GM12878 (cell line): ENCODE measurements at regions of chr5 and their contacts with region 1.

Region 1: DNA sequence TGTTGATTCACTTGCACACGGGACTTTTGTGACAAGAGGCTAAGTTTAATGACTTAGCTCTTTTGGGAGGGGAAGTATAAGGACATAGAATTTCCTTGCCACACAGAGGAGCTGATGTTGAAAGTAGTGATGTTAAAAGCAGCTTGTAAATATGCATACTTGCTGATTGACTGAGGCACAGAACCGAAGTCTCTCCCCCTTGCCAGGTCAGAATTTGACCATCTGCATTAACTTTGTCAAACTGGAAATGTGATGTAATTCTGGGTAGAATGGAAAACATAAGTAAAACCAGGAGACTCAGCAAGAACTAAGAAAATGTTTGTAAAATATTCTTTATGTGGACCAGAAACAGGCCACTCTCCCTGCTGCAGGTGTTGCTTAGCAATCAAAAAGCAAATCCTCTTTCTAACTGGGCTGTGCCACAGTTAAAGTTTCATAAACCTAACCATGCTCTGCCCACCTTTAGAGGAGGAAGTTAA is 284.2 kb downstream of the NR3C1 start:
- DNase-seq: no peak
- ATAC-seq: peak; percentile 82
- H3K4me3 ChIP-seq: no peak overlapping the region
- H3K27ac ChIP-seq: peak overlapping the region; percentile 35
- H3K4me1 ChIP-seq: peaks cover 23% of the 10 kb centered on the region
- H3K27me3 ChIP-seq: no peaks in the 10 kb centered on the region
- CTCF ChIP-seq: no peak
- EP300 ChIP-seq: no peak
- POLR2A ChIP-seq: no peak
- RAD21 ChIP-seq: no peak

Region 2: GRCh38 chr5:142938266-142938880 is 181.0 kb before region 1 on chr5:
- CTCF ChIA-PET with region 1: no interaction called
- POLR2A ChIA-PET with region 1: no interaction called
- RAD21 ChIA-PET with region 1: no interaction called
- SMC1A ChIA-PET with region 1: no interaction called
- in situ Hi-C with region 1: no loop called
- intact Hi-C with region 1: no loop called
- DNase-seq: no peak
- ATAC-seq: no peak
- H3K4me3 ChIP-seq: no peak overlapping the region
- H3K27ac ChIP-seq: no peak overlapping the region
- H3K4me1 ChIP-seq: peaks cover 4% of the 10 kb centered on the region; the same call in 1 of the 2 replicates
- H3K27me3 ChIP-seq: no peaks in the 10 kb centered on the region
- CTCF ChIP-seq: no peak
- EP300 ChIP-seq: no peak
- POLR2A ChIP-seq: no peak
- RAD21 ChIP-seq: no peak

Region 3: DNA sequence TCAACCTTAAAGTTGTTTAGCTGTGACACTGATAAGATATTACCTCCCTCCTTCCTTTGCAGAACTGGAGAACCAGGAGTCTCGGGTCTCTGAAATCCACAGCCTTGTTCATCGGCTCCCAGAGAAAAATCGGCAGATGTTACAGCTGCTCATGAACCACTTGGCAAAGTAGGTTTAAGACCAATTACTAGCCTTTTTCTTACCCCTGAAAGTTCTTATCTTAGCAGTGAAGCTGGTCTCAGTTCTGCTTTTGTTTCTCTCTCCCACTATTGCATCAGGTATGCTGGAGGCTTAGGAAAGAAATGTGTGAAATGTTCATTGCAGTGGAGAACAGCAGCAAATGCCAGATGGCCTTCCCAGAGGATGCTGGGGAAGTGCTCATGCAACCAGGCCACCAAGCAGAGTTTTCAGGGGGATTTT is 61.7 kb before region 1 on chr5:
- CTCF ChIA-PET with region 1: interaction called, 3 read pairs
- POLR2A ChIA-PET with region 1: interaction called, 6 read pairs
- RAD21 ChIA-PET with region 1: interaction called, 13 read pairs
- SMC1A ChIA-PET with region 1: interaction called, 10 read pairs
- in situ Hi-C with region 1: no loop called
- intact Hi-C with region 1: no loop called
- DNase-seq: peak; percentile 85
- ATAC-seq: peak; percentile 59
- H3K4me3 ChIP-seq: peak overlapping the region; percentile 77
- H3K27ac ChIP-seq: peak overlapping the region; percentile 100
- H3K4me1 ChIP-seq: peaks cover 56% of the 10 kb centered on the region
- H3K27me3 ChIP-seq: no peaks in the 10 kb centered on the region
- CTCF ChIP-seq: no peak
- EP300 ChIP-seq: peak; percentile 77 to 89; a peak in 3 of 4 replicates
- POLR2A ChIP-seq: peak; percentile 54; the same call in 1 of the 2 replicates
- RAD21 ChIP-seq: peak; percentile 36; the same call in 1 of the 2 replicates

Region 4: DNA sequence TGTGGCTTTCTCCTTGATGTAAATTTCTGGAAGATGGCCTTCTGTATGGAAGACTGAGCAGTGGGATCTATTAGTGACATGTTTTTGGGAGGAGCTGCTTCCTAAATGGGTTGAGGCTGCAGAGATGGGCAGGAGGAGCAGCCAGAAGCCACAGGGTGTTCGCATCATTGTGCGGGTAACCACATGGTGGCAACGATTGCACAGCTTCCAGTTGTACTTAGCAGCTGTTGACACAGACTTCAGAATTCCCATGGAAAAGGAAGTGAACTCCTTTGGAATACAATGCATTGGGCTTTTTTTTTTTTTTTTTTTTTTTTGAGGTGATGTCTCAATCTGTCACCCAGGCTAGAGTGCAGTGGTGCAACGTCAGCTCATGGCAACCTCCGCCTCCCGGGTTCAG is 13.2 kb before region 1 on chr5:
- CTCF ChIA-PET with region 1: interaction called, 10 read pairs
- POLR2A ChIA-PET with region 1: interaction called, 4 read pairs
- RAD21 ChIA-PET with region 1: interaction called, 8 read pairs
- SMC1A ChIA-PET with region 1: interaction called, 271 read pairs
- in situ Hi-C with region 1: no loop called
- intact Hi-C with region 1: no loop called
- DNase-seq: no peak
- ATAC-seq: no peak
- H3K4me3 ChIP-seq: no peak overlapping the region
- H3K27ac ChIP-seq: no peak overlapping the region
- H3K4me1 ChIP-seq: peaks cover 9% of the 10 kb centered on the region
- H3K27me3 ChIP-seq: no peaks in the 10 kb centered on the region
- CTCF ChIP-seq: no peak
- EP300 ChIP-seq: no peak
- POLR2A ChIP-seq: no peak
- RAD21 ChIP-seq: no peak

Region 5: GRCh38 chr5:143134900-143135299 is 15.6 kb after region 1 on chr5:
- CTCF ChIA-PET with region 1: interaction called, 14 read pairs
- POLR2A ChIA-PET with region 1: interaction called, 17 read pairs
- RAD21 ChIA-PET with region 1: interaction called, 6 read pairs
- SMC1A ChIA-PET with region 1: interaction called, 271 read pairs
- in situ Hi-C with region 1: no loop called
- intact Hi-C with region 1: no loop called
- DNase-seq: no peak
- ATAC-seq: peak; percentile 83
- H3K4me3 ChIP-seq: no peak overlapping the region
- H3K27ac ChIP-seq: no peak overlapping the region
- H3K4me1 ChIP-seq: no peaks in the 10 kb centered on the region
- H3K27me3 ChIP-seq: no peaks in the 10 kb centered on the region
- CTCF ChIP-seq: no peak
- EP300 ChIP-seq: no peak
- POLR2A ChIP-seq: no peak
- RAD21 ChIP-seq: no peak

Region 6: DNA sequence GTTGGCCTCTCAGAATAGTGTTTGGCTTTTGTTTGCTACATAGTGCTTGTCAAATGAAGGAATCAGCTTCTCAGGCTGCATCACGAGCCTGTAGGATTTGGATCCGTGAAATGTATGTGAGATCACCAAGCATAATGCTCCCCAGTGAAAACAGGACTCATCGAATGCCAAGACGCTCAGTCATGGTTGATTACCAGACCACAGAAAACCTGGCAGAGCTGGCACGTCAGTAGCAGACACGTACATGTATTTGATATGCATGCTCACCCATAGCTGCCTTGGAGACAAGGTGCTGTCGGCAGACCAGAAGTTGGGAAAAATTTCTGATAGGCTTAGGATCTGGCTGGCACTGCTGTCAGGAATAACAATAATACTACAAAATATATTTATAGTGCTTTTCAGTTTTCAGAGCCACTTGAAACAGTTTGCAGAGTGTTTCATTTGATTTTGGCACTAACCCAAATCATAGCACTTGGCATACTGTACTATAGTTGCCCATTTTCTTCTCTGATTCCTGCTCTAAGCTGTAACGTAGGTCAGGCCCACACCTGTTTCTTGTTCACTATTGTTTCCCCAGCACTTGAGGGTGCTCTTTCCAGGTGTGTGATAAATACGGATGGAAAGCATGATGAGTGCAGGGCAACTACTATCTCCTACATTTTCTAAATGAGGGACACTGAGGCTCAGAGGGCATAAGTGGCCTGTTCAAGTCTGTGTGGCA is 58.1 kb after region 1 on chr5:
- CTCF ChIA-PET with region 1: no interaction called
- POLR2A ChIA-PET with region 1: interaction called, 3 read pairs
- RAD21 ChIA-PET with region 1: interaction called, 16 read pairs
- SMC1A ChIA-PET with region 1: interaction called, 18 read pairs
- in situ Hi-C with region 1: no loop called
- intact Hi-C with region 1: no loop called
- DNase-seq: no peak
- ATAC-seq: no peak
- H3K4me3 ChIP-seq: no peak overlapping the region
- H3K27ac ChIP-seq: no peak overlapping the region
- H3K4me1 ChIP-seq: peaks cover 8% of the 10 kb centered on the region
- H3K27me3 ChIP-seq: no peaks in the 10 kb centered on the region
- CTCF ChIP-seq: no peak
- EP300 ChIP-seq: no peak
- POLR2A ChIP-seq: no peak
- RAD21 ChIP-seq: no peak